CD4-positive, alpha-beta memory T cell (primary cell): ENCODE measurements at regions of chr14 and their contacts with region 1.

Region 1: GRCh38 chr14:61456720-61457119 is 135.3 kb downstream of the PRKCH start:
- DNase-seq: peak; percentile 74 to 83 (median 77)
- H3K4me3 ChIP-seq: no peak overlapping the region
- H3K4me3 Mint-ChIP-seq: peak overlapping the region in 2 of 8 donors; percentile 17 to 27
- H3K27ac ChIP-seq: peak overlapping the region; percentile 13
- H3K27ac Mint-ChIP-seq: peak overlapping the region; percentile 75 to 97 (median 92)
- H3K4me1 ChIP-seq: peaks cover 70% of the 10 kb centered on the region
- H3K4me1 Mint-ChIP-seq: peaks cover 63 to 91% (median 71%) of the 10 kb centered on the region in 4 donors
- H3K27me3 ChIP-seq: no peaks in the 10 kb centered on the region
- H3K27me3 Mint-ChIP-seq: no peaks in the 10 kb centered on the region

Region 2: GRCh38 chr14:61296719-61297502 is 159.8 kb before region 1 on chr14:
- CTCF ChIA-PET with region 1: interaction called, 8 read pairs
- POLR2A ChIA-PET with region 1: interaction called, 4 read pairs
- intact Hi-C with region 1: loop called (anchors 1 kb)
- DNase-seq: peak; percentile 41 to 67 (median 59)
- H3K4me3 ChIP-seq: no peak overlapping the region
- H3K4me3 Mint-ChIP-seq: no peak overlapping the region
- H3K27ac ChIP-seq: no peak overlapping the region
- H3K27ac Mint-ChIP-seq: peak overlapping the region in 2 of 7 donors; percentile 43 to 79
- H3K4me1 ChIP-seq: peaks cover 21% of the 10 kb centered on the region
- H3K4me1 Mint-ChIP-seq: peaks cover 27 to 47% (median 38%) of the 10 kb centered on the region in 4 donors
- H3K27me3 ChIP-seq: no peaks in the 10 kb centered on the region
- H3K27me3 Mint-ChIP-seq: no peaks in the 10 kb centered on the region

Region 3: DNA sequence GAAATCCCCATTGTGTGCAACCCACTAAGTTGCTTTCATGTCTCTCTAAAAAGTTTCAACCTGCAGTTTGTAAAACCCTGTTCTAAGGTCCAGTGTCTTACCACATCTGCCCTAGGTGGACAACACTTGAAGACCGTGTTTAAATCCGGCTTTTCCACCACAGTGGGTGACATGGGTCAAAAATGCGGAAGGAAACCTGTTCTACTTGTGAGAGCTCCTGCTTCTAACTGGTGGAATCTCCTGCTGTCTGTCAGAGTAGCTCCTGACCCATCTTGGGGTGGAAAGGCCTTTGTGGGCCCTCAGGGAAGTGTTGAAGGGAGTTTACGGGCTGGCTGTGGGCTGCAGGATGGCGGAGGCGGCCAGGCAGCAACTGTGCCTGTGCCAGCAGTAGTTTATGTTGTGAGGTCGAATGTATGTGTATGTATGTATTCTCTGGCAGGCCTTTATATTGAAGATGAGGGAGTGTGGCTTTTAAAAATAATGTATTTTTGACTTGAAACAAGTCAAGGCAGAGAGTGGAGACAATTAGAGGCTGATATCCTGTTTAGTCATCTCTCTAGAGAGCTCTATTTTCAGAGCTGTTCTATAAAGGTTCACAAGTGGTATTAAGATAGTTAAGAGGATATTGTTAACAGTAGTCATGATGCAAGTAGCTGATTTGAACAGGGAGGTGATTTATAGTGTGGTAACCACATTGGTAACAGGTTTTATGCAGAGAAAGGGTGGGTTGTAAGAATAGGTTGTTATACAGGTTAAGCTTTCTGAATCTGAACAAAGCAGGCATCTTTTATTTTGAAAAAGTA is 68.3 kb before region 1 on chr14:
- CTCF ChIA-PET with region 1: interaction called, 7 read pairs
- POLR2A ChIA-PET with region 1: interaction called, 33 read pairs
- intact Hi-C with region 1: loop called (anchors 2 kb)
- DNase-seq: peak; percentile 50 to 69 (median 61)
- H3K4me3 ChIP-seq: peak overlapping the region in 1 of 2 donors; percentile 26
- H3K4me3 Mint-ChIP-seq: peak overlapping the region in 2 of 8 donors; percentile 72 to 78
- H3K27ac ChIP-seq: peak overlapping the region; percentile 65
- H3K27ac Mint-ChIP-seq: no peak overlapping the region
- H3K4me1 ChIP-seq: peaks cover 100% of the 10 kb centered on the region
- H3K4me1 Mint-ChIP-seq: peaks cover 0 to 50% (median 20%) of the 10 kb centered on the region in 4 donors
- H3K27me3 ChIP-seq: no peaks in the 10 kb centered on the region
- H3K27me3 Mint-ChIP-seq: no peaks in the 10 kb centered on the region

Region 4: DNA sequence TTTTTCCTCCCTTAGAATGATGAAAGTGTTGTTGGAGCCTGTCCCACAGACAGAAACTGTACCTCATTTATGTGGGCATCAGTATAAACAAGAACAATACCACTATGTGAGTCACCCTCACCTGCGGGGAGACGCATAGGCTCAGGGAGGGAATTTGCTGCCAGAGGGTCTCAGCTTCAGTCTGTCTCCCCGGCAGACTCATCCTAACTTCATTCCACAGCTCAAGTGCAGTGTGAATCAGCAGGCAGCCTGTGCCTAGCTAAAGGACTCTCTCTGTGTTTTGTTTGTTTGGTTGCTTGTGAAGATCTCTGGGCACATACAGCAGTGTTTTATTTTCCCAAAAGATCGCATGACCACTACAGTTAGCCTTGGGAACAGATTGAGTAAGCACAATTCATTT is 36.4 kb before region 1 on chr14:
- CTCF ChIA-PET with region 1: interaction called, 3 read pairs
- POLR2A ChIA-PET with region 1: interaction called, 11 read pairs
- intact Hi-C with region 1: no loop called
- DNase-seq: peak in 1 of 5 donors; percentile 65
- H3K4me3 ChIP-seq: no peak overlapping the region
- H3K4me3 Mint-ChIP-seq: peak overlapping the region in 7 of 8 donors; percentile 25 to 74 (median 45)
- H3K27ac ChIP-seq: no peak overlapping the region
- H3K27ac Mint-ChIP-seq: peak overlapping the region in 6 of 7 donors; percentile 54 to 82 (median 71)
- H3K4me1 ChIP-seq: peaks cover 100% of the 10 kb centered on the region
- H3K4me1 Mint-ChIP-seq: peaks cover 5 to 82% (median 42%) of the 10 kb centered on the region in 4 donors
- H3K27me3 ChIP-seq: no peaks in the 10 kb centered on the region
- H3K27me3 Mint-ChIP-seq: no peaks in the 10 kb centered on the region

Region 5: GRCh38 chr14:61444215-61444768 is 12.4 kb before region 1 on chr14:
- CTCF ChIA-PET with region 1: interaction called, 18 read pairs
- POLR2A ChIA-PET with region 1: interaction called, 26 read pairs
- intact Hi-C with region 1: loop called (anchors 1 kb)
- DNase-seq: peak; percentile 56 to 87 (median 63)
- H3K4me3 ChIP-seq: no peak overlapping the region
- H3K4me3 Mint-ChIP-seq: peak overlapping the region; percentile 58 to 87 (median 78)
- H3K27ac ChIP-seq: peak overlapping the region; percentile 44
- H3K27ac Mint-ChIP-seq: peak overlapping the region; percentile 89 to 97 (median 93)
- H3K4me1 ChIP-seq: peaks cover 98% of the 10 kb centered on the region
- H3K4me1 Mint-ChIP-seq: peaks cover 74 to 97% (median 87%) of the 10 kb centered on the region in 4 donors
- H3K27me3 ChIP-seq: no peaks in the 10 kb centered on the region
- H3K27me3 Mint-ChIP-seq: no peaks in the 10 kb centered on the region